ENCODE measurements at regions of chr6 and their contacts with region 1.

Region 1: GRCh38 chr6:217048-217659 is 75.1 kb upstream of the DUSP22 start:
- DNase-seq: peak; percentile 48
- ATAC-seq: no peak
- H3K4me3 Mint-ChIP-seq: no peak overlapping the region
- H3K27ac Mint-ChIP-seq: no peak overlapping the region
- H3K4me1 Mint-ChIP-seq: peaks cover 48% of the 10 kb centered on the region
- H3K27me3 Mint-ChIP-seq: no peaks in the 10 kb centered on the region
- CTCF ChIP-seq: peak; percentile 59

Region 2: DNA sequence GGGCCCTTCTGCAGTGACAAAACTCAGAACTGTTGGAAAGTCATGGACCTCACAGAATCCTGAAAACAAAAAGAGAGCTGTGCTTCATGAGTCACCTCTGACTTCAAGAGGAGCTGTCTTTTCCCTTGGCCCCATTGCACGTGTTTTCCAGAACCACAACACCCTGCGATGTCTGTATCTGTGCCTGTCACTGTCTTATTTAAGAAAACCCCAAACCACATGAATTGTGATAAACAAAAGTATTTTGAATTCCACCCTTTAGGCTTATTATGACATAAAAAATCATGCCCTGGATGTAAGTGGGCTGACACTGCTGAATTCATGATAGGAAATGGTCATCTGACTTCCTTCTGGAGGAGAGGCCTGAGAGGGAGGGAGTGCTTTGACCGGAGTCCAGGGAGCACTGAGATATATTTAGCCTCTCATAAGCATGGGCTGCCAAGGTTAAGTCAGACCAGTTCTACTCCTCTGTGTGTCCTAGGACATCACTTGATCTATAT is 21.2 kb before region 1 on chr6:
- CTCF ChIA-PET with region 1: interaction called, 22 read pairs
- POLR2A ChIA-PET with region 1: interaction called, 6 read pairs
- intact Hi-C with region 1: no loop called
- DNase-seq: peak; percentile 82
- ATAC-seq: peak; percentile 31
- H3K4me3 Mint-ChIP-seq: no peak overlapping the region
- H3K27ac Mint-ChIP-seq: peak overlapping the region; percentile 40
- H3K4me1 Mint-ChIP-seq: peaks cover 47% of the 10 kb centered on the region
- H3K27me3 Mint-ChIP-seq: no peaks in the 10 kb centered on the region
- CTCF ChIP-seq: no peak

Region 3: GRCh38 chr6:206264-206663 is 10.9 kb before region 1 on chr6:
- CTCF ChIA-PET with region 1: interaction called, 15 read pairs
- POLR2A ChIA-PET with region 1: interaction called, 5 read pairs
- intact Hi-C with region 1: no loop called
- DNase-seq: no peak
- ATAC-seq: no peak
- H3K4me3 Mint-ChIP-seq: no peak overlapping the region
- H3K27ac Mint-ChIP-seq: no peak overlapping the region
- H3K4me1 Mint-ChIP-seq: peaks cover 24% of the 10 kb centered on the region
- H3K27me3 Mint-ChIP-seq: no peaks in the 10 kb centered on the region
- CTCF ChIP-seq: no peak

Region 4: GRCh38 chr6:227074-227782 is 10.1 kb after region 1 on chr6:
- CTCF ChIA-PET with region 1: interaction called, 15 read pairs
- POLR2A ChIA-PET with region 1: interaction called, 12 read pairs
- intact Hi-C with region 1: no loop called
- DNase-seq: peak; percentile 61
- ATAC-seq: no peak
- H3K4me3 Mint-ChIP-seq: no peak overlapping the region
- H3K27ac Mint-ChIP-seq: peak overlapping the region; percentile 4
- H3K4me1 Mint-ChIP-seq: peaks cover 74% of the 10 kb centered on the region
- H3K27me3 Mint-ChIP-seq: peaks cover 1% of the 10 kb centered on the region
- CTCF ChIP-seq: no peak

Region 5: DNA sequence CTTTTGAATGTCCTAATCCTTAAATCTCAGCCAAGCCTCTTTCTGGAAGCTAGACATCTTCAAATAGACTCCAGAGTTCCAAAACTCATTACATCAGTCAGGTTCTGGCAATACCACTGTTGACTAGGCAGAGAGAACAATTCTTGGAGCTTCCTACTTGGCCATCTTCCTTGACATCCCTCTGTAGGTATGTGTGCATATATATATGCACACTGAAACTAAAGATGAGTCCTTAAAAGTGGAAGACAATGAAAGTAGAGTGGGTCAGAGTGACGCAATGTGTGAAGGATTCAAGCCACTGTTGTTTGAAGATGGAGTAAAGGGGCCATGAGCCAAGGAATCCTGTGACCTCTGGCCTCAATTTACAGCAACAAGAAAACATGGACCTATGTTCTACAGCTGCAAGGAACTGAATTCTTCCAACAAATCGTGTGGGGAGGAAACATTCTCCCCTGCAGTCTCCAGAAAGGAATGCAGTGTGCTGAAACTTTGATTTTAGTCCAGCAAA is 56.5 kb after region 1 on chr6:
- CTCF ChIA-PET with region 1: no interaction called
- POLR2A ChIA-PET with region 1: no interaction called
- intact Hi-C with region 1: no loop called
- DNase-seq: no peak
- ATAC-seq: no peak
- H3K4me3 Mint-ChIP-seq: no peak overlapping the region
- H3K27ac Mint-ChIP-seq: no peak overlapping the region
- H3K4me1 Mint-ChIP-seq: peaks cover 24% of the 10 kb centered on the region
- H3K27me3 Mint-ChIP-seq: no peaks in the 10 kb centered on the region
- CTCF ChIP-seq: no peak

Region 6: DNA sequence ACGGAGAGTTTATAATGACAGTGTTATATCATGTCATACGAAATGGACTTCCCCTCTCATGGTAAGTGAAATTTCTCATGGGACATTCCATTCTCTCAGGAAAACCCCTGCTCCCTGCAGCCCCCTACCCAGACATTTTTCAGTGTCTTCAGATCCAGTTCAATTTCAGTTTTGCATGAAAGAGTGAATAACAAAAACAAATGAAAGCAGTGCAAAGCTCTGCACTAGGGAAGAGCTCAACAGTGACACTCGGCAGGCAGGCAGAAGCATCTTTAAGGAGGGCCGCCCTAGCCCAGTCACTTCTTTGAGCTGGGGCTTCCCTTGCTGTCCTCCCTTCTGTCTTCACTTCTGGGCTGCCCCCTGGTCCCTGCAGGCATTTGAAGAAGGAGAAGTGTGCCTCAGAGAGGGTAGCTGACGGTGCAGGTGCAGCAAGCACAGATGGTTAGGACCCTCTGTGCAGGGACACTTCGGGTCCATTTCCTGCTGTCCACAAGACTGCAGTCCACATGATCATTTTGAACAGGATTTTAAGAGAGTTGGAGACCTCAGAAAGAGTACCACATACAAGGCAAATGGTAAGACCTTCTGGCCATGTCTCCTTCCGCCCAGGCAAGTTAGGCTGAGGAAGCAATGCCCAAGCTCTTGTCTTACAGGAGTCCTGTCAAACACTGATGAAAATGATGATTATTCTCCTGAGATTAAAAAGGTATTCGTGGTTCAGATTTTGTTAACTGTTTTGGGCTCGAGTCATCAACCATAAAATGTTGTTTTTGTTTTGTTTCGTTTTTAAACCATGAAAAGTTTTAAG is 69.7 kb after region 1 on chr6:
- CTCF ChIA-PET with region 1: no interaction called
- POLR2A ChIA-PET with region 1: no interaction called
- intact Hi-C with region 1: no loop called
- DNase-seq: peak; percentile 32
- ATAC-seq: no peak
- H3K4me3 Mint-ChIP-seq: no peak overlapping the region
- H3K27ac Mint-ChIP-seq: peak overlapping the region; percentile 26
- H3K4me1 Mint-ChIP-seq: peaks cover 50% of the 10 kb centered on the region
- H3K27me3 Mint-ChIP-seq: no peaks in the 10 kb centered on the region
- CTCF ChIP-seq: no peak

Region 7: DNA sequence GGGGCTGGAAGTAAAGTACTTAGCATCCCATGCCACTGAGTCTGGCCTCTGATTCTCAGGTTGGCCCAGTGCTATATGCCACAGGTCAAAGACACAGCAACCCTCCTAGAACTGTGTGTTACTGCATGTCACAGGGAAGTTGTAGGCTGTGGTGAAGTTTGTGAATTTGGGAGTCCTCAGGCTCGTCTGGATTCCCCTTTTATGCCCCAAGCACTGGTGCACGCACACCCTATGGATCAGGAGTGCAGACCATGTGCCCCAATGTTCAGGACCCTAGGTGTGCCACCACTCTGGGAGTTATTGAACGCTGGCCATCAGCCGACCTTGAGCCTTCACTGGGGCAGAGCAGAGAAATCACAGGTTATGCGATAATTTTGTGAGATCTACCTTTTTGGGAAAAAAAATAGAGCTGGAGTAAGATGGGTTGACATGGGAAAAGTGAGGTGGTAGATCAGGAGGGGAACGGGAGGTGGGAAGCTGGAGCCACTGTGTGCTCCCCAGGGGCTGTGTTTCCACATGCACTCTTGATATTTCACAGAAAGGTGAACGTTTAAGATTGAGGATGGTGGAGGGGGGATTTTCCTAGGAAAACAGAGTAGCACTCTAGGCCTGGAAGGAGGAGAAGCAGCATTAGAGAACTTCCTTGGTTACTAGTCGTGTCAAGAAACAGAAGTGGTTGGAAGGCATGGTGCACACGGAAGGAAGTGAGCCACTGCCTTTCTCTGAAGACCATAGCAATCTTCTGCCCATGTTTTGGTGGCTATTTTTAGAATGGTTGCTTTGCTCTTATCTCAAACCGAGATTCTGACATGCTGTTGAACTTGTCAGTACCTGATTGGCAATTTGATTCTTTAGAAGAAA is 119.2 kb after region 1 on chr6:
- CTCF ChIA-PET with region 1: interaction called, 5 read pairs
- POLR2A ChIA-PET with region 1: interaction called, 10 read pairs
- intact Hi-C with region 1: no loop called
- DNase-seq: peak; percentile 28
- ATAC-seq: peak; percentile 8
- H3K4me3 Mint-ChIP-seq: peak overlapping the region; percentile 9
- H3K27ac Mint-ChIP-seq: peak overlapping the region; percentile 90
- H3K4me1 Mint-ChIP-seq: peaks cover 58% of the 10 kb centered on the region
- H3K27me3 Mint-ChIP-seq: no peaks in the 10 kb centered on the region
- CTCF ChIP-seq: no peak

Region 8: GRCh38 chr6:624979-625378 is 407.8 kb after region 1 on chr6:
- CTCF ChIA-PET with region 1: no interaction called
- POLR2A ChIA-PET with region 1: no interaction called
- intact Hi-C with region 1: no loop called
- DNase-seq: no peak
- ATAC-seq: no peak
- H3K4me3 Mint-ChIP-seq: no peak overlapping the region
- H3K27ac Mint-ChIP-seq: no peak overlapping the region
- H3K4me1 Mint-ChIP-seq: peaks cover 16% of the 10 kb centered on the region
- H3K27me3 Mint-ChIP-seq: no peaks in the 10 kb centered on the region
- CTCF ChIP-seq: no peak